ENCODE measurements at regions of chrX and their contacts with region 1.

Region 1: GRCh38 chrX:38664285-38664684 is 102.9 kb downstream of the TSPAN7 start:
- DNase-seq: peak; percentile 25
- H3K4me3 ChIP-seq: no peak overlapping the region
- H3K27ac ChIP-seq: no peak overlapping the region
- H3K4me1 ChIP-seq: no peaks in the 10 kb centered on the region
- H3K27me3 ChIP-seq: peaks cover 6% of the 10 kb centered on the region
- CTCF ChIP-seq: peak; percentile 31 to 56

Region 2: GRCh38 chrX:38726597-38726996 is 62.3 kb after region 1 on chrX:
- CTCF ChIA-PET with region 1: no interaction called
- dilution Hi-C with region 1: no loop called
- in situ Hi-C with region 1: no loop called
- intact Hi-C with region 1: no loop called
- DNase-seq: no peak
- H3K4me3 ChIP-seq: no peak overlapping the region
- H3K27ac ChIP-seq: no peak overlapping the region
- H3K4me1 ChIP-seq: no peaks in the 10 kb centered on the region
- H3K27me3 ChIP-seq: no peaks in the 10 kb centered on the region
- CTCF ChIP-seq: no peak

Region 3: GRCh38 chrX:38754102-38754790 is 90.0 kb after region 1 on chrX:
- CTCF ChIA-PET with region 1: no interaction called
- dilution Hi-C with region 1: no loop called
- in situ Hi-C with region 1: no loop called
- intact Hi-C with region 1: loop called (anchors 5 kb)
- DNase-seq: peak; percentile 35
- H3K4me3 ChIP-seq: no peak overlapping the region
- H3K27ac ChIP-seq: no peak overlapping the region
- H3K4me1 ChIP-seq: no peaks in the 10 kb centered on the region
- H3K27me3 ChIP-seq: peaks cover 2% of the 10 kb centered on the region
- CTCF ChIP-seq: peak; percentile 59 to 74

Region 4: GRCh38 chrX:39149761-39150160 is 485.5 kb after region 1 on chrX:
- CTCF ChIA-PET with region 1: no interaction called
- dilution Hi-C with region 1: no loop called
- in situ Hi-C with region 1: no loop called
- intact Hi-C with region 1: loop called (anchors 2 kb)
- DNase-seq: peak; percentile 12
- H3K4me3 ChIP-seq: no peak overlapping the region
- H3K27ac ChIP-seq: no peak overlapping the region
- H3K4me1 ChIP-seq: no peaks in the 10 kb centered on the region
- H3K27me3 ChIP-seq: no peaks in the 10 kb centered on the region
- CTCF ChIP-seq: peak; percentile 63 to 85

Region 5: GRCh38 chrX:39253551-39253950 is 589.3 kb after region 1 on chrX:
- CTCF ChIA-PET with region 1: no interaction called
- dilution Hi-C with region 1: no loop called
- in situ Hi-C with region 1: no loop called
- intact Hi-C with region 1: loop called (anchors 5 kb)
- DNase-seq: peak; percentile 63
- H3K4me3 ChIP-seq: no peak overlapping the region
- H3K27ac ChIP-seq: no peak overlapping the region
- H3K4me1 ChIP-seq: peaks cover 3% of the 10 kb centered on the region
- H3K27me3 ChIP-seq: peaks cover 2% of the 10 kb centered on the region
- CTCF ChIP-seq: no peak

Region 6: GRCh38 chrX:40552768-40553167 is 1888.5 kb after region 1 on chrX:
- CTCF ChIA-PET with region 1: no interaction called
- dilution Hi-C with region 1: no loop called
- in situ Hi-C with region 1: no loop called
- intact Hi-C with region 1: loop called (anchors 5 kb)
- DNase-seq: no peak
- H3K4me3 ChIP-seq: no peak overlapping the region
- H3K27ac ChIP-seq: no peak overlapping the region
- H3K4me1 ChIP-seq: no peaks in the 10 kb centered on the region
- H3K27me3 ChIP-seq: peaks cover 2% of the 10 kb centered on the region
- CTCF ChIP-seq: peak in 1 of 2 donors; percentile 11

Region 7: GRCh38 chrX:40647307-40648197 is 1983.3 kb after region 1 on chrX and contains the start of gene CXorf38:
- CTCF ChIA-PET with region 1: no interaction called
- dilution Hi-C with region 1: no loop called
- in situ Hi-C with region 1: no loop called
- intact Hi-C with region 1: loop called (anchors 10 kb)
- DNase-seq: peak; percentile 88
- H3K4me3 ChIP-seq: peak within 1 kb of the TSS; percentile 52 to 89 (median 77)
- H3K27ac ChIP-seq: peak within 1 kb of the TSS; percentile 62
- H3K4me1 ChIP-seq: peaks cover 17% of the 10 kb centered on the region
- H3K27me3 ChIP-seq: no peaks in the 10 kb centered on the region
- CTCF ChIP-seq: no peak
- total RNA-seq, gene CXorf38: 18.0 to 19.8 TPM